PC-9 (cell line): ENCODE measurements at regions of chr16 and their contacts with region 1.

Region 1: GRCh38 chr16:75064403-75065148 is 52.0 kb downstream of the LDHD start:
- DNase-seq: peak; percentile 63 to 91
- H3K4me3 ChIP-seq: peak overlapping the region; percentile 52
- H3K27ac ChIP-seq: peak overlapping the region; percentile 86
- H3K4me1 ChIP-seq: peaks cover 72% of the 10 kb centered on the region
- H3K27me3 ChIP-seq: no peaks in the 10 kb centered on the region
- CTCF ChIP-seq: no peak

Region 2: GRCh38 chr16:74666425-74667254 is 397.9 kb before region 1 on chr16 and contains the start of gene RFWD3:
- CTCF ChIA-PET with region 1: no interaction called
- POLR2A ChIA-PET with region 1: no interaction called
- intact Hi-C with region 1: no loop called
- DNase-seq: peak; percentile 94 to 97
- H3K4me3 ChIP-seq: peak within 1 kb of the TSS; percentile 100
- H3K27ac ChIP-seq: peak within 1 kb of the TSS; percentile 53
- H3K4me1 ChIP-seq: peaks cover 8% of the 10 kb centered on the region; the same call in 1 of the 2 replicates
- H3K27me3 ChIP-seq: no peaks in the 10 kb centered on the region
- CTCF ChIP-seq: no peak
- total RNA-seq, gene RFWD3: 49.5 and 58.0 TPM in 2 replicates

Region 3: GRCh38 chr16:74984535-74985296 is 79.9 kb before region 1 on chr16 and contains the start of gene WDR59:
- CTCF ChIA-PET with region 1: interaction called, 12 read pairs
- POLR2A ChIA-PET with region 1: interaction called, 27 read pairs
- intact Hi-C with region 1: no loop called
- DNase-seq: peak; percentile 99
- H3K4me3 ChIP-seq: peak within 1 kb of the TSS; percentile 89
- H3K27ac ChIP-seq: peak within 1 kb of the TSS; percentile 59
- H3K4me1 ChIP-seq: 0 out of 2 replicates have a peak, but pooled peaks cover 8% of the 10 kb centered on the region
- H3K27me3 ChIP-seq: no peaks in the 10 kb centered on the region
- CTCF ChIP-seq: no peak
- total RNA-seq, gene WDR59: 97.0 and 97.1 TPM in 2 replicates

Region 4: GRCh38 chr16:75011634-75012307 is 52.8 kb before region 1 on chr16:
- CTCF ChIA-PET with region 1: no interaction called
- POLR2A ChIA-PET with region 1: interaction called, 11 read pairs
- intact Hi-C with region 1: no loop called
- DNase-seq: peak; percentile 59 to 86
- H3K4me3 ChIP-seq: no peak overlapping the region; the same call in 1 of the 2 replicates
- H3K27ac ChIP-seq: peak overlapping the region; percentile 73
- H3K4me1 ChIP-seq: peaks cover 45% of the 10 kb centered on the region
- H3K27me3 ChIP-seq: no peaks in the 10 kb centered on the region
- CTCF ChIP-seq: no peak

Region 5: DNA sequence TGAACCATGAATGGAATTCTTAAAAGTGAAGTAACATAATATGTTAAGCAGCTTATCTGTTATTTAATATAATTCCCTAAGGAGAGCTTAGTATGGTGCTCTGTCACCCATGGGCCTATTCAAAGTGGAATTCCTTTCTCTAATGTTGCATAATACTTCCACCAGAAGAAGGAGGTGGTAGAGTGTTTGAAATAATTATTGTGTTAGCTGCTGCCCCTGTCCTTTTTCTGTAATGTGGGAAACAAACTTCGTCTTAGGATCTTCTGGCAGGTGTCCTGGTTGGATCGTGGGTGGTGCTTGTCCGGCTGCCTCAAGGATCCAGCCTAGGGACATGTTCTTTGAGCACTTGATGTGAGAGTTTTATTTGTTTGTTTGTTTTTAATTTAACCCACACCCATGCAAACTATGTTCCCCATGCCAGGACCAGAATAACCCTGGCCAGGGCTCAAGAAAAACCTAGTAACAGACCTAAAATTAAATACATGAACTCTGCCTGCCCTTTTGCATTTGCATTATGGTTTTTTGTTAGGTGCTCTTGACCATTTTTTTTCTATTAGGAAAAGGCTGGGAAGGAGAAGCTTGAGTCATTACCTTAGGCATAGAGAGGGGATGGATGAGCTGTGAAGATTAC is 19.7 kb before region 1 on chr16:
- CTCF ChIA-PET with region 1: interaction called, 3 read pairs
- POLR2A ChIA-PET with region 1: interaction called, 5 read pairs
- intact Hi-C with region 1: loop called (anchors 2 kb)
- DNase-seq: peak; percentile 67 to 96
- H3K4me3 ChIP-seq: no peak overlapping the region
- H3K27ac ChIP-seq: peak overlapping the region; percentile 81
- H3K4me1 ChIP-seq: peaks cover 69% of the 10 kb centered on the region
- H3K27me3 ChIP-seq: no peaks in the 10 kb centered on the region
- CTCF ChIP-seq: no peak

Region 6: GRCh38 chr16:75081179-75081859 is 16.7 kb after region 1 on chr16:
- CTCF ChIA-PET with region 1: interaction called, 12 read pairs
- POLR2A ChIA-PET with region 1: no interaction called
- intact Hi-C with region 1: no loop called
- DNase-seq: no peak
- H3K4me3 ChIP-seq: no peak overlapping the region
- H3K27ac ChIP-seq: no peak overlapping the region
- H3K4me1 ChIP-seq: peaks cover 8% of the 10 kb centered on the region
- H3K27me3 ChIP-seq: no peaks in the 10 kb centered on the region
- CTCF ChIP-seq: no peak

Region 7: GRCh38 chr16:75110637-75111513 is 46.3 kb after region 1 on chr16:
- CTCF ChIA-PET with region 1: interaction called, 4 read pairs
- POLR2A ChIA-PET with region 1: interaction called, 6 read pairs
- intact Hi-C with region 1: loop called (anchors 1 kb)
- DNase-seq: peak; percentile 75 to 84
- H3K4me3 ChIP-seq: no peak overlapping the region
- H3K27ac ChIP-seq: no peak overlapping the region
- H3K4me1 ChIP-seq: peaks cover 40% of the 10 kb centered on the region
- H3K27me3 ChIP-seq: no peaks in the 10 kb centered on the region
- CTCF ChIP-seq: peak; percentile 89

Region 8: DNA sequence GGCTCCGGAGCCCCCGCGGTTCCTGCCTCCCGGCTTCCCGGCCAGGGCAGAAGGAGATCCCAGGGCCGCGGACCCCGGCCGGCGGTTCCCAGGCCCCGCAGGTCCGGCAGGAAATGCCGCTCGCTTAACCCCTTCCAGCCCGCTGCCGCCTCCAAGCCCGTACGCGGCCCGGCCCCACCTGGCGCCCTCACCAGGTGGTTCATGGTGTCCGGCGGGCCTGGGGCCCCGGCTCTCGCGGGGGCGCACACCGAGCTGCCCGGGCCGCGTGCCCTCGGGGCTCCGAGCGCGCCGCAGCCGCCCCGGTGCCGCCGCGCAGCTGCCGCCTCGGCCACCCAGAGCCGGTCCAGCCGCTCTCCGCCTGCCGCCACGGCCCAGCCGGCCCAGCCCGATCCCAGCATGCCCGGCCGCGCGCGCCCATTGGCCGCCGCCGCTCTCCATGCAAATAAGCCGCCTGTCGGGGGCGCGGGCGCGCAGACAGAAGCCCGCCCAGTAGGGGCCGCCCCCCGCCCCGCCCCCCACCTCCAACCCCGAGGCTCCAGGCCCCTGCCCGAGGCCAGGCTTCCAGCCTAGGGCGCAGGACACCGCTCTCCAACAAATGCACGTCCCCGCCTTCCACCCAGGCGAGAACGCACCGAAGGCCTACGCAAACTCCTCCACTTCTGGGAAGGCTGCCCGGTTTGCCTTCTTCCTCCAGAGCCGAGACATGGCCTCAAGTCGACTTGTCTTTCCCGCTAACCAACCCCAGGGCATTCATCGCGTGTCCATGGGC is 186.9 kb after region 1 on chr16 and contains the start of gene BCAR1:
- CTCF ChIA-PET with region 1: no interaction called
- POLR2A ChIA-PET with region 1: no interaction called
- intact Hi-C with region 1: no loop called
- DNase-seq: peak; percentile 68 to 90
- H3K4me3 ChIP-seq: peak within 1 kb of the TSS; percentile 71
- H3K27ac ChIP-seq: peak within 1 kb of the TSS; percentile 54; the same call in 1 of the 2 replicates
- H3K4me1 ChIP-seq: peaks cover 54% of the 10 kb centered on the region
- H3K27me3 ChIP-seq: no peaks in the 10 kb centered on the region
- CTCF ChIP-seq: no peak
- total RNA-seq, gene BCAR1: 53.9 and 62.5 TPM in 2 replicates